HEK293T (cell line): ENCODE measurements at regions of chr15 and their contacts with region 1.

Region 1: GRCh38 chr15:99250494-99251435 is 516 bp upstream of the LRRC28 start:
- DNase-seq: peak; percentile 98

Region 2: DNA sequence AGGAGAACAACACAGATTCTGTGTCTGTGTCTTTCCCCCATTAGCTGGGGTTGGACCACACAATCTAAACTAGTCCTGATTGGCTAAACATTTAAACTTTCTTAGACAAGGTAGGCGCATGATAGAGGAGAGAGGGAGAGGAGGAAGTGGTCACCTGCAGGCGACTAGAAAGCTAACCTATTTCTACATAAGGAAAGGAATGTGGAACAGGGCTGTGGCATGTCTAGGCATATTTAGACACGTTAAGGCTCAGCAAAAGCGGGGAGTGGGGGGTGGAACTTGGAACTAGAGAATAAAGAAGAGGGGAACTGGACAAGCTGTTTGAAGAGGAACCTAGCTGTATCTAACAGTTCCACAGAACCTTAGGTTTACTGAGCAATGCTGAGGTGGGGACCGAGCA is 13.4 kb after region 1 on chr15:
- CTCF ChIA-PET with region 1: no interaction called
- POLR2A ChIA-PET with region 1: interaction called, 13 read pairs
- DNase-seq: no peak

Region 3: GRCh38 chr15:99275525-99276128 is 24.9 kb after region 1 on chr15:
- CTCF ChIA-PET with region 1: interaction called, 12 read pairs
- POLR2A ChIA-PET with region 1: interaction called, 10 read pairs
- DNase-seq: no peak

Region 4: DNA sequence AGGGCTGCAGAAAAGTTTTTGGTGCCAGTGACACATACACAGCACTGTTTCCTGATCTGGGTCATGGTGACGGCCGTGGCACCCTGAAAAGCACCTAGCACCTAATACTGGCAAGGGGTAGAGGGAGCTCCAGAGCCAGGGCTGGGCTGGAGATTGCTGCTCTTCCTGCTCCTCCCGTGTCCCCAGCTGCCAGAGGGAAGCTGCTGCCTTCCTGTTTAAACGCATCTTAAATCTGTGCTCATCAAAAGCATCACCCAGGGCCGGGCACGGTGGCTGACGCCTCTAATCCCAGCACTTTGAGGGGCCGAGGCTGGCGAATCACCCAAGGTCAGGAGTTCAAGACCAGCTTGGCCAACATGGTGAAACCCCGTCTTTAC is 158.3 kb after region 1 on chr15:
- CTCF ChIA-PET with region 1: no interaction called
- POLR2A ChIA-PET with region 1: no interaction called
- DNase-seq: no peak

Region 5: DNA sequence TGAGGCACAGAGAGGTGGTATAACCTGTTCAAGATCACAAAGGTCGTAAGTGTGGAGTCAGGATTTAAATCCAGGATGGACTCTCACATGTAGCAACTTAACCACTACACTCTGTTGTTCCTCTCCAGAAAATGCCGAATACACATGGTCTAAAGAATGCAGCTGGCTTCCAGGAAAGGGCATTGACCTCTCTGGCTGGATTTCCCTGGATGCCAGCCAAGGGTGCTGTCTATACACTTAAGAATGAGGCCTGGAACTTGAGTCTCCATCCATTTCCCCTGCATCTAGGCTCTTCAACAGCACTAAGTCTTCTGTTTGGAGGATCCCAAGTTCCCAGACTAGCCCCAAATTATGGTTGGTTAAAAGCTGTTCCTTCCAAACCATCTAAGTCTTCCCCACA is 1217.5 kb after region 1 on chr15:
- CTCF ChIA-PET with region 1: no interaction called
- POLR2A ChIA-PET with region 1: no interaction called
- DNase-seq: no peak